ENCODE measurements at regions of chr17 and their contacts with region 1.

Region 1: DNA sequence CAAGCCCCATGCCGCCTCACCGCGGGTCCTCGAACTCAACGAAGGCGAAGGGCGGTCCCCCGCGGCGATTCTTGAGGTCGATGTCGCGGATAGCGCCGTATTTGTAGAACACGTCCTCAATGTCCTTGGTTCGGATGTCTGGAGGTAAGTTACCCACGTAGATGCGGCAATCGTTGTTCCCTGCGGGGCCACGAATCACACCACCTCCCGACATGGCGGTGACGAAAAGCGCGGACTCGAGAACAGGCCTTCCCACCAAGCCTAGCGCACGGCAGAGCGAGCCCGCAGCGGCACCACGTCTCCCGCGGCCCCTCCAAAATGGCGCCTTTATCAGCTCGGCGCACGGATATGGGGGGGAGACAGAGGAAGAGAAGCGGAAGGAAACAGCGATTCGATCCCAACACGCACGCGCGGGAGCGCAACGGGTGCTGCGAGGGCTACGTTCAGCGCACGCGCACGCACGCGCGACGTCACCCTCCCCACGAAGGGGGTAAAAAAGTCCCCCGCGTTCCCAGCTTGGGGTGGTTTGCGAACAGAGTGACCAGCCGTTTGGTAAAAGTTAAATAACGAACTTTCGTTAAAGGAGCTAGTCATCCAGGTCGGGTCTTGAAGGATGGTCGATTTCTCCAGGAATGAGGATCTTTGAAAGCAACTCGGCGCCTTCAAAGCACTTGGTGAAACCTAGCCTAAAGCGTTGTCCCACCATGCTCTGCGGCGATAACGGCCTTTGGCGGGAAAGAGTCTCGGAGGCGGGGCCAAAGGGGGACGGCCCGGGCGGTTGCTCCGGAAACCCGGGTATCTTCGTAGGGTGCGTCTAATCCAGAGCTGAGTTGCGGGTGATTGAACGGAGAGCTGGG is at the start of gene SRSF1:
- H3K4me3 ChIP-seq: peak within 1 kb of the TSS; percentile 94
- H3K27ac ChIP-seq: peak within 1 kb of the TSS; percentile 100
- H3K4me1 ChIP-seq: peaks cover 22% of the 10 kb centered on the region
- CTCF ChIP-seq: no peak

Region 2: DNA sequence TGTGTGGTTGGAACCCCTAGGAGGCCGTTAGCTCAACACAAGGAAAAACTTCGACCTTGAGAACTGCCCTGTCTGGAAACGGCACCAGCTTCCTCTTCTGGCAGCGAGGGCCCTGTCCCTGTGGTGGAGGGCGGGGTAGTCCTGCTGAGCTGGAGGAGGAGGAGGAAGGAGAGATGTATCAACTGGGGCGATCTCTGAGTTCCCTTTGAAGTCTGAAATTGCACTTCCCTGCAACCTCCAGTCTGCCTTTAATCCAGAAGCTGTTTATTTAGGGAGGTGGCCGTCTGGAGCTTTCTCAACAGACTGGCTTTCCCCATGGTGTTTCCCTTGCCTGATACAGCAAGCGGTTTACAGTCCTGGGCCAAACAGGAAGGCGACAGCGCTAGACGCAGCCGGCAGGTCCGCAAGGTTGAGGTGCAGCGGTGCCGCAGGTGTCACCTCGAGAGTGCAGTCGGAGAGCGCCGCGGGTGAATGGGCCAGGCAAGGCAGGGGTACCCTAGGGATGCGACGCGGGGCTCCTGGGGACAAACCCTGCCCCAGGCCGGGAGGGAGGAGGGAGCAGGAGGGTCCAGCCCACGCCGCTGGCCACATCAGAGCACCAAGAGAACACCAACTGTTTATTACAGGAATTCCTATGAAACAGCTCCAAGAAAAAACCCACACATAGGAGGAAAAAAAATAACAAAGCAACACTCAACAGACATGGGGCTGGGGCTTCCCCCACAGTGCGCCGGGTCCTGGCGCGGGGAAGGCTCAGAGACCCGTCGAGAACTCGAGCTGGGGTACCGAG is 146.0 kb before region 1 on chr17:
- CTCF ChIA-PET with region 1: interaction called, 434 read pairs
- POLR2A ChIA-PET with region 1: interaction called, 8 read pairs
- H3K4me3 ChIP-seq: no peak overlapping the region
- H3K27ac ChIP-seq: peak overlapping the region; percentile 38; the same call in 1 of the 2 replicates
- H3K4me1 ChIP-seq: peaks cover 4% of the 10 kb centered on the region; the same call in 1 of the 2 replicates
- CTCF ChIP-seq: no peak

Region 3: DNA sequence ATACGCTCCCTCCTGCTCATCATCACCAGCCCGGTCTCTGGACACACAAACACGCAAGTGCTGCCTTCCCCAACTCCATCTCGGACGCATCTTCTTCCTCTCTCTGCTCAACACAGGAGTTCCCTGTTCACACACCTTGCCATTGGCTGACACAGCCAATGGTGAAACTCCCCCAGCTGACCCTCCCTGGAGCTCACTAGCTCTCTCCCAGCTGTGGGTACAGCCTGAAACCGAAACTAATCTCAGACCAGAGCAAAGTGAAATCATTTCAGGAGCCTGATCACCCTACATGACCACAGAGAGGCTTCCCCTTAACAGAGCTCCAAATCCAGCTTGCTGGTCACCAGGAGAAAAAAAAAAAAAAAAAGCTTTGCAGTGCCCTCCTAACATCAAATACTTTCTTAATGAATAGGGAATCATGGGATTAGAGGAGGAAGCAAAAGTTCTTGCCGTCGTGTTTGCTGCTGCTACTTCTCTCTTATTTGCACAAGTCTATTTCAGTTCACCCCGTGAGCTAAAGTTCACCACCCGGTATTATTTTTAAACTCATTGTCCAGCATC is 60.3 kb before region 1 on chr17:
- CTCF ChIA-PET with region 1: interaction called, 5 read pairs
- POLR2A ChIA-PET with region 1: interaction called, 13 read pairs
- H3K4me3 ChIP-seq: no peak overlapping the region
- H3K27ac ChIP-seq: no peak overlapping the region
- H3K4me1 ChIP-seq: peaks cover 52% of the 10 kb centered on the region
- CTCF ChIP-seq: no peak

Region 4: GRCh38 chr17:57987580-57988421 is 19.4 kb before region 1 on chr17 and contains the start of gene VEZF1:
- CTCF ChIA-PET with region 1: interaction called, 26 read pairs
- POLR2A ChIA-PET with region 1: interaction called, 60 read pairs
- H3K4me3 ChIP-seq: peak within 1 kb of the TSS; percentile 89
- H3K27ac ChIP-seq: peak within 1 kb of the TSS; percentile 97
- H3K4me1 ChIP-seq: peaks cover 33% of the 10 kb centered on the region
- CTCF ChIP-seq: no peak

Region 5: DNA sequence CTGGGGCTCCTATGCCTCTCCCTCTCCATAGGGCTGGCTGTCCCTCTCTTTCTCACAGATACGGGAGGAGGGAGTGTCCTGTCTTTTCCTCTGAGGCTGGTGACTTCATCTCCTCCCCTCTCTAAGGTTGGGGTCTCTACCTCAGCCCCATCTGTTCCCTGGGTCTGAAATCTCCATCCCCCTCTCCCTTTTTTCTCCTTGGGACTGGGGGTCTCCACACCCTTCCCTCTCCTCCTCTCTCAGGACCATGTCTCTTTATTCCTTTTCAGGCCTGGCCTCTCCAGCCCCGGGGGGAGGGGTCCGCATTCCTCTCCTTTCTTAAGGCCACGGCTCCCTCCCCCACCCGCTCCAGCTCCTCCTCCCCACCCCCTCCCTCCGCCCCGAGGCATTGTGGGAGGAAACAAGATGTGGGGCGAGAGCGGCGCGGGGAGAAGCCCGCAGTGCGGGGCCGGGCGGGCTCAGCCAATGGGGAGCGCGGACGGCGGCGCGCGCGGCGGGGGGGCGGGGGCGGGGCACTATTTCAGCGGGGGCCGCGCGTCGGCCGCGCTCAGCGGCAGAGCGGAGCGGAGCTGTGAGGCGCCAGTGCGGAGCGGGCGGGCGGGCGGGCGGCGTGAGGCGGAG is 75.8 kb after region 1 on chr17 and contains the start of gene DYNLL2:
- CTCF ChIA-PET with region 1: interaction called, 3 read pairs
- POLR2A ChIA-PET with region 1: interaction called, 101 read pairs
- H3K4me3 ChIP-seq: peak within 1 kb of the TSS; percentile 91
- H3K27ac ChIP-seq: peak within 1 kb of the TSS; percentile 90
- H3K4me1 ChIP-seq: peaks cover 19% of the 10 kb centered on the region
- CTCF ChIP-seq: no peak

Region 6: DNA sequence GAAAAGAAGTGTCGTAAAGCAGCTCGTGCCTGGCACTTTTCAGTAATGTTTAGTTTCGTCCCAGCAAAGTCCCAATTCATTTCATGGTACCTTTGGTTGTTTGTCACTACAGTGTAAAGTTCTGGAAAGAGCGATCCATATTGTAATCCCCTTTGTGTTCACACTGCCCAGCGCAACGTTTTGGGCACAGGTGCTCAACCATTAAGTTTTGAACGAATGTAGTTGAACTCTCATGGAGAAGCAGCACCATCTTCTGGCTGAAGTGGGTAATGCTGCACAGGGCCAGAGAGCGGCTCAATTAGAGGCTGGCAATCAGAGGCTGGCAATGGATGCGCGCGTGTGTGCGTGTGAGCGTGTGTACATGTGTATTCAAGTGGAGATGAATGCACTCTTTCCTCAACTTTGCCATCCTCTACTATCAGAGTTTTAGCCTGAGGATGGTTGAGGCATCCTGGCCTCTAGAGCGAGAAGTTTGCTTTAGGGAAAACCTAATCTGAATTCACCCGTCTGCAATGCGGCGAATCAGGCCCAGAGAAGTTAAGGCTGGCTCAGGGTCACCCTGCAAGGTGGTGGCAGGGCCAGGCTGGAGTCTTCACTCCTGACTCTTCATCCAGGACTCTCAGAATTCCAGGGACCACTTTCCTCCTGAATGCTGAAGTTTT is 105.9 kb after region 1 on chr17:
- CTCF ChIA-PET with region 1: interaction called, 19 read pairs
- POLR2A ChIA-PET with region 1: interaction called, 4 read pairs
- H3K4me3 ChIP-seq: no peak overlapping the region
- H3K27ac ChIP-seq: no peak overlapping the region
- H3K4me1 ChIP-seq: no peaks in the 10 kb centered on the region
- CTCF ChIP-seq: peak; percentile 92

Measured in HEK293 (cell line).